Panc1 (cell line): ENCODE measurements at regions of chr6 and their contacts with region 1.

Region 1: GRCh38 chr6:126060400-126060799 is 74.1 kb downstream of the TRMT11 start:
- DNase-seq: no peak
- ATAC-seq: no peak
- H3K4me3 ChIP-seq: no peak overlapping the region
- H3K27ac ChIP-seq: no peak overlapping the region
- H3K4me1 ChIP-seq: no peaks in the 10 kb centered on the region
- H3K27me3 ChIP-seq: no peaks in the 10 kb centered on the region
- CTCF ChIP-seq: no peak

Region 2: DNA sequence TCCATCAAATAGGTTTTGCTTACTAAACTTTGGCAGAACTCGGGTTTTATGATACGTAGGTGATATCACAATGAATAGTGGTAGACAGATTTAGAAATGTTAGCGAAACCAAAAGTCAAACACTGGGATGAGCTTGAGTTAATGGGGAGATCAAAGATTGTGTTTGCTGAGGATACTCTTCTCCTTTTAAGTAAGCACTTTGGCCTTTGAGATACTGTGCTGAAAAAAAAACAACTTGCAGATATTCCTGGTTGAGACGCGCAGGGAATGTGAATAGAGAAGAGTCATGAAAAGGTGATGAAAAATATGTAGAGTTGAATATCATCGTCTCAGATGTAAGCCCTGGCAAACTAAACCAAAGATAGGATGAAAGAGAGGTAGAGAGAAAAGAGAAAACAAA is 25.7 kb before region 1 on chr6:
- CTCF ChIA-PET with region 1: no interaction called
- POLR2A ChIA-PET with region 1: interaction called, 15 read pairs
- in situ Hi-C with region 1: no loop called
- intact Hi-C with region 1: no loop called
- DNase-seq: no peak
- ATAC-seq: no peak
- H3K4me3 ChIP-seq: no peak overlapping the region
- H3K27ac ChIP-seq: no peak overlapping the region
- H3K4me1 ChIP-seq: no peaks in the 10 kb centered on the region
- H3K27me3 ChIP-seq: no peaks in the 10 kb centered on the region
- CTCF ChIP-seq: no peak